A549 (cell line): ENCODE measurements at regions of chr3 and their contacts with region 1.

Region 1: DNA sequence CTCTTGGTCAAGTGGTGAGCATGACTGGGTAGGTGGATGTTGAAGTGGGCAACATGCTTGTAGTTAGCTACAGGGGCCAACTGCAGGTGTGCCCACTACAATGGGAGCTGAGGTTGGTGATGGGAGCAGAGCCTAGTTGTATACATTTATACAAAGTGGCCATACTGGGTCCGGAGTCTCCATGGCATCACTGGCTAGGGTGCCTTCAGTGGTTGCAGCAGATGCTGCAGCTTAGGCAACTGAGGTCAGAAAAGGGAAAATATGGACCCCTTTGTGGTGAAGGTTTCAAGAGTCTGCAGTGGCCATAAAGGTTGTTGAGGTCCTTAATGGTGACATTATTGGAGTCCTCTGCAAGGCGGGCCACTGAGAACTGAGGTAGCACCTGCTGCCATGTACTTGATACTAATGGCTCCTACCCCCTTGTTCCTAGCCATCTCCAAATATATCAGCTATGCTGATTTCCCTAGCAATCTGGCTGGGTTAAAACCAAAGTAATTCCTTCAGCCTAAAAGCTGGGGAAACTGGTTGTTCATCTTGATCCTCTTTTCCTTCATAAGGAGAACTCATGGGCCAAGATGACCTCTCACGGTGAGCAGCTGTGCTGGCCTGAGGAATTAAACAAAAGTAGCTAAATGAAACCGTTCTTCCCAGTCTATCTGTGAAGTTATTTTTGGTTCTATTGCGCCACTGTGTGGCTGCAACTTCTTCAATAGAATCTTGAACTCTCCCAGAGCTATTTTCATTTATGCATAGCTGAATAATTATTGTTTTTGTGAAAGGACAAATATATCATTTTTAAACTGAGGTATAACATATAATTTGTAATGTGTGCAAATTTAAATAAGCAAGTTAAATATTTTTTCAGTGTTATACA is 76.0 kb upstream of the PLSCR4 start:
- DNase-seq: peak; percentile 31 to 66
- ATAC-seq: peak; percentile 93
- H3K4me3 ChIP-seq: no peak overlapping the region
- H3K27ac ChIP-seq: peak overlapping the region; percentile 28 to 56; a peak in 4 of 6 replicates
- H3K4me1 ChIP-seq: no peaks in the 10 kb centered on the region
- CTCF ChIP-seq: peak; percentile 88
- EP300 ChIP-seq: no peak
- POLR2A ChIP-seq: no peak
- RAD21 ChIP-seq: peak; percentile 88 to 96

Region 2: GRCh38 chr3:146195030-146195429 is 131.9 kb before region 1 on chr3:
- CTCF ChIA-PET with region 1: interaction called, 46 read pairs
- POLR2A ChIA-PET with region 1: interaction called, 7 read pairs
- DNase-seq: no peak
- ATAC-seq: no peak
- H3K4me3 ChIP-seq: no peak overlapping the region
- H3K27ac ChIP-seq: no peak overlapping the region
- H3K4me1 ChIP-seq: no peaks in the 10 kb centered on the region
- CTCF ChIP-seq: no peak
- EP300 ChIP-seq: no peak
- POLR2A ChIP-seq: no peak
- RAD21 ChIP-seq: no peak

Region 3: GRCh38 chr3:146203776-146204175 is 123.1 kb before region 1 on chr3:
- CTCF ChIA-PET with region 1: interaction called, 13 read pairs
- POLR2A ChIA-PET with region 1: no interaction called
- DNase-seq: no peak
- ATAC-seq: no peak
- H3K4me3 ChIP-seq: no peak overlapping the region
- H3K27ac ChIP-seq: no peak overlapping the region
- H3K4me1 ChIP-seq: no peaks in the 10 kb centered on the region
- CTCF ChIP-seq: no peak
- EP300 ChIP-seq: no peak
- POLR2A ChIP-seq: no peak
- RAD21 ChIP-seq: no peak

Region 4: DNA sequence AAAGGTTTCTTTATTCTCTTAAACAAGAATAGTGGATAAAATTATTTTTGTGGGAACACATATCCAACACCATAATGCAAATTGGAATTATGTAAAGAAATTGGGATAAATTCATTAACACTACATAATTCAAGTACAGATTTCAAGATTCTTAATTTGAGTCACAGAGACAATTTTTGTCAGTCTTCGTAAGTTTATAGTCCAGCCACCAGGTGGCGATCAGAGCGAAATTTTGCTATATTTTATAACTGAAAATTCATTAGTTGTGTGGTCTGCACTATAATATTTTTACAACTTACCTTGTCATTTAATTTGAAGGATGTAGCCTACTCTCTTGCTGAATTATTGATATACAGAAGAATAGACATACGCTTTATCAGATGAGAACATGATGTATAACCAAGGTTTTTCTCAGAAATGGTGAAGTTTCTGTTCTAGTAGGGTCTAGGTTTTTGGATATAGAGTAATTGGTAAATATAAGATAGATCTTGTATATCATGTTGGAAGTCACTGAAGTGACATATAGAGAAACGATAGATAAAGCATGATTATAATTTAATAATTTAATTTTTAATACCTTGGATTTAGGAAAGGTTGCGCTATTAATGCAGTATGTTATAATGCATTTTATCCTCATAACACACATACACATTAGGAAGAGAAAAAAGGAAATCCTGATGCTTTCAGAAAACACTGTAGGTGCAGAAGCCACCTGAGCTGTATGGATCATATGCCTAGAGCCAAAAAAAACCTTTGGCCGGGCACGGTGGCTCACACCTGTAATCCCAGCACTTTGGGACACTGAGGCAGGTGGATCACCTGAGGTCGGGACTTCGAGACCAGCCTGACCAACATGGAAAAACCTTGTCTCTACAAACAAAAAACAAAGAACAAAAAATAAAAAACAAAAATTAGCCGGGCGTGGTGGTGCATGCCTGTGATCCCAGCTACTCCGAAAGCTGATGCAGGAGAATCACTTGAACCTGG is 107.7 kb before region 1 on chr3:
- CTCF ChIA-PET with region 1: interaction called, 41 read pairs
- POLR2A ChIA-PET with region 1: interaction called, 9 read pairs
- DNase-seq: peak; percentile 15 to 40
- ATAC-seq: no peak
- H3K4me3 ChIP-seq: no peak overlapping the region
- H3K27ac ChIP-seq: peak overlapping the region in 1 of 2 experiments; percentile 32; a peak in 2 of 6 replicates
- H3K4me1 ChIP-seq: peaks cover 43% of the 10 kb centered on the region
- CTCF ChIP-seq: peak; percentile 93
- EP300 ChIP-seq: no peak
- POLR2A ChIP-seq: no peak
- RAD21 ChIP-seq: peak; percentile 81 to 86

Region 5: DNA sequence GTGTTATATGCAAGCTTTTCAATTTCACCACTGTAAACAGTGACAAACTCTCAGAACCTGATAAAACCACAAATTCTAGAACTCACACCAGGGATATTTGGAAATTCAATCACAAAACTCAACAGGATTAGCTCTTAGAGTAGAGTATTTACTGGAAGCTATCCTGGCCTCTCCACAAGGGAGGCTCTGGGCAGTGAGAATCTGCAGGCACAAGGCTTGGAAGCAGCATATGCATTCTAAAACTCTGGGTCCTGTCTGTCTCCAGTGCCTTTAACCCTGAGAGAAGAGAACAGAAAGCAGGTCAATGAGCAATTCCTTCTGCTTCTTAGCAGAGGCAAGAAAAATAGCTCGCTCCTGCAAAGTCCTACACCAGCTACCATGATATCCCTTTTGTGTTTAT is 99.4 kb before region 1 on chr3:
- CTCF ChIA-PET with region 1: interaction called, 41 read pairs
- POLR2A ChIA-PET with region 1: interaction called, 9 read pairs
- DNase-seq: no peak
- ATAC-seq: no peak
- H3K4me3 ChIP-seq: no peak overlapping the region
- H3K27ac ChIP-seq: no peak overlapping the region
- H3K4me1 ChIP-seq: peaks cover 15% of the 10 kb centered on the region
- CTCF ChIP-seq: no peak
- EP300 ChIP-seq: no peak
- POLR2A ChIP-seq: no peak
- RAD21 ChIP-seq: no peak

Region 6: GRCh38 chr3:146280864-146281263 is 46.0 kb before region 1 on chr3:
- CTCF ChIA-PET with region 1: no interaction called
- POLR2A ChIA-PET with region 1: no interaction called
- DNase-seq: no peak
- ATAC-seq: no peak
- H3K4me3 ChIP-seq: no peak overlapping the region
- H3K27ac ChIP-seq: no peak overlapping the region
- H3K4me1 ChIP-seq: peaks cover 9% of the 10 kb centered on the region
- CTCF ChIP-seq: no peak
- EP300 ChIP-seq: no peak
- POLR2A ChIP-seq: no peak
- RAD21 ChIP-seq: no peak

Region 7: DNA sequence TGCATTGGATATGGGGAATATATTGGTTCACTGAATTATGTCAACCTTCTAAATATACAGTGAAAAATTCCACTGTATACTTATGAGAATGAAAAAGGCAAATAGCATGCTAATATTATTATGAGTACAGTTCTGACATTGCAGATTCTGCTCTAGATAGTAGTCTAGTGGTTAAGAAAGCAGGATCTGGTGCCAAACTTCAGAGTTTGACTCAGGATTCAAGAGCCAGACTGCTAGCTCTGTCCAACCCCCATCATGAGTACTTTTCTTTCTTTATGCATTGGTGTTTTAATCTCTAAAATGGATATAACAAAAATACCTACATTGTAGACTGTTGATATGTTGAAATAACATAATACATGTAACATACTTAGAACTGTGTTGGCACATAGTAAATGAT is 18.7 kb before region 1 on chr3:
- CTCF ChIA-PET with region 1: no interaction called
- POLR2A ChIA-PET with region 1: no interaction called
- DNase-seq: no peak
- ATAC-seq: peak in 1 of 2 experiments; percentile 42; a peak in 1 of 6 replicates
- H3K4me3 ChIP-seq: no peak overlapping the region
- H3K27ac ChIP-seq: peak overlapping the region; percentile 29 to 33; a peak in 5 of 6 replicates
- H3K4me1 ChIP-seq: peaks cover 12% of the 10 kb centered on the region
- CTCF ChIP-seq: no peak
- EP300 ChIP-seq: no peak
- POLR2A ChIP-seq: no peak
- RAD21 ChIP-seq: no peak

Region 8: DNA sequence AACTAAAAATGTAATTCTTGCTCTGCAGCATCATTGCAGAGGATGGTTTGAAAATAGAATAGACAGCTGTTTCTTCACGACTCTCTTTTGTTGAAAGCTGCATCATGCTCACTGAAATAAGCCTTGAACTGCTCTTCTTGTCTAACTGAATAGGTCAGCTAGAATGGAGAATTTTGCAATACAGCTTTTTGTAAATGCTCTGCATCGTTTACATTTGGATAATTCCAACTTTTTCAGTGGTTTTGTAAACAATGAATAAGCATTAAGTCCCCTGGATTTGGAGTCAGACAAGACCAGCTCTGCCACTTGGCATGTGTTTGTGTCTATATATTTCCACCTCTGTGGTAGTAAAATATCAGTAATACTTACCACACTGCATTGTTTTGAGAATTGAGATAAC is 47.2 kb after region 1 on chr3:
- CTCF ChIA-PET with region 1: no interaction called
- POLR2A ChIA-PET with region 1: no interaction called
- DNase-seq: peak in 1 of 2 experiments; percentile 47
- ATAC-seq: peak in 1 of 2 experiments; percentile 65; a peak in 2 of 6 replicates
- H3K4me3 ChIP-seq: no peak overlapping the region
- H3K27ac ChIP-seq: no peak overlapping the region; a peak in 1 of 6 replicates
- H3K4me1 ChIP-seq: peaks cover 17% of the 10 kb centered on the region
- CTCF ChIP-seq: no peak
- EP300 ChIP-seq: no peak; a peak in 1 of 5 replicates
- POLR2A ChIP-seq: no peak
- RAD21 ChIP-seq: no peak

Region 9: GRCh38 chr3:146577662-146578061 is 250.8 kb after region 1 on chr3:
- CTCF ChIA-PET with region 1: interaction called, 14 read pairs
- POLR2A ChIA-PET with region 1: no interaction called
- DNase-seq: peak in 1 of 2 experiments; percentile 70
- ATAC-seq: peak; percentile 56 to 82; a peak in 4 of 6 replicates
- H3K4me3 ChIP-seq: no peak overlapping the region
- H3K27ac ChIP-seq: no peak overlapping the region
- H3K4me1 ChIP-seq: no peaks in the 10 kb centered on the region
- CTCF ChIP-seq: peak; percentile 82
- EP300 ChIP-seq: no peak
- POLR2A ChIP-seq: no peak
- RAD21 ChIP-seq: peak; percentile 90 to 93